ENCODE measurements at regions of chr1 and their contacts with region 1.

Region 1: DNA sequence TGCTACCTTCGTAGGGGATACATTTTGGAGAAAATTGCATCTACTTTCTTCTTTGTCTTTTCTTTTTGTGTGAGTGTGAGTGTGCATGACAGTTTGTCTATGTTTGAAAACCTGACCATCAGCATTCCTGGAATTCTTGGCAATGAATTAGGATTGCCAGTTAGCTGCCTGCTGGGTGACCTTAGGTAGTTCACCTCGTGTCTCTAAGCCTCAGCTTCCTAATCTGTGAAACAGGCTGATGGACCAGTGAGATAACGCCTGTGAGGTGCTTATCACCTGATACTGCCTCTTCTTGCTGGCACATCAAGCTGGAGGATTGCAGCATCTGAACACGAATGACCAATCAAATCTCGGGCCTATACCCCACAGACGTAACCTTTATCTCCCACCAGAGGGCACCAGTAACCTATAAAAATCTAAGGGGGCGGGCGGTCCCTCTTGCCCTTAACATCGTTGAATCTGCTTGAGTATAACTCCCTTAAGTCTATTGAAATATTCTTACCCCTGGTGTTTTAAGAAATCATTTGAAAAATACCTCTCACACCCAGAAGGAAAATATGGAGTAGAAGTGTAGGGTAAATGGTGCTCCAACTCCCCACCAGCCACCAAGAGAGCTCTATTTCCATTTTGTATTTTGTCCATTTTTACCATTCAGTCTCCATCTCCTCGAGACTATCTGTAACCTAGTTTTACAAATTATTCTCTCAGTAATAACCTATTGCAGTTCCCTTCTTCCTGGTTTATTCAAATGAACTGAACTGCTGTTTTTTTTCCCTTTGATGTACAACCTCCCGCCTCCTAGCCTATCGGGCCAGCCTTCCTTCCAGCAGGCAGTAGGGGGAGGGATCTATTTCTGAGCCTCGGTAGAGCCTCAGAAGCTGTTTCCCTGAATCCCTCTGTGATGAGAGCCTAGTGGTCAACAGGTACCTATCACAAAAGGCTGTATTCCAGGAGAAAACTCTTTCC is 49.7 kb downstream of the MDM4 start:
- DNase-seq: no peak
- H3K4me3 ChIP-seq: no peak overlapping the region
- H3K27ac ChIP-seq: no peak overlapping the region
- H3K4me1 ChIP-seq: peaks cover 0 to 12% (median 8%) of the 10 kb centered on the region in 4 donors
- H3K27me3 ChIP-seq: no peaks in the 10 kb centered on the region
- CTCF ChIP-seq: peak; percentile 70 to 83 (median 71)
- EP300 ChIP-seq: no peak
- POLR2A ChIP-seq: no peak

Region 2: DNA sequence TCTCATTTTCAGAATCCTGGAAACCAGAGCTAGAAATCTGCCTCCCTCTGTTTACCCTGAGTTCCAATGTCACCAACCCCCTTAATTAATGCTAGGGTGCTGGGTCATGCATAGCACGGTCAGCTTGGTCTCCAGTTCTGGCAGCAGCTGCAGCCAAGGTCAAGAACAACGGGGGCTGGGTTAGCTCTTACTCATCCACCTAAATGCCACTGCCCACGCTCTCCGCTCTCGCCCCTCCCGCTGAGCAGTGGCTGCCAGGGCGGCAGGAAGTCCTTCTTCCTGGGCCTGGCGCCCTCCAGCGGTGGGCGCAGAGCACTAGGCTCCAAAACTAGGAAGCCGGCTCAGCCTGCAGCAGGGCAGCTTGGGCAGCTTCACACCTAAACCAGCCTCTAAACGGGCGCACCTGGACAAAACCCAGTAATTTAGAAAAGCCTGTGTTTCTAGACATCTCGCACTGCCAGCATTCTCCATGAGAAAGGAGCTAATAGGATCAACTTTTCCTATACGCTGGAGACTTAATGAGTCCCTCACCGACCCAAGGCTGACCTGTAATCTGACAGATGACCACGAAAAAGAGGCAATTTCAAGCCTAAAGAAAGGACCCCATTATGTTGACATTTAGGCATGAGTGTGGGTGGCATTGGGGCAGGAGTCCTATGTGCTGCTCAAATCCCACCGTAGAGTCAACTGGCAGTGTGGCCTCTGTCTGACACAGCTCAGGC is 198.0 kb after region 1 on chr1:
- intact Hi-C with region 1: loop called (anchors 1 kb)
- DNase-seq: no peak
- H3K4me3 ChIP-seq: no peak overlapping the region
- H3K27ac ChIP-seq: no peak overlapping the region
- H3K4me1 ChIP-seq: peaks cover 11 to 14% (median 12%) of the 10 kb centered on the region in 4 donors
- H3K27me3 ChIP-seq: peaks cover 0 to 2% (median 0%) of the 10 kb centered on the region in 4 donors
- CTCF ChIP-seq: peak; percentile 77 to 93 (median 78)
- EP300 ChIP-seq: no peak
- POLR2A ChIP-seq: no peak

Region 3: DNA sequence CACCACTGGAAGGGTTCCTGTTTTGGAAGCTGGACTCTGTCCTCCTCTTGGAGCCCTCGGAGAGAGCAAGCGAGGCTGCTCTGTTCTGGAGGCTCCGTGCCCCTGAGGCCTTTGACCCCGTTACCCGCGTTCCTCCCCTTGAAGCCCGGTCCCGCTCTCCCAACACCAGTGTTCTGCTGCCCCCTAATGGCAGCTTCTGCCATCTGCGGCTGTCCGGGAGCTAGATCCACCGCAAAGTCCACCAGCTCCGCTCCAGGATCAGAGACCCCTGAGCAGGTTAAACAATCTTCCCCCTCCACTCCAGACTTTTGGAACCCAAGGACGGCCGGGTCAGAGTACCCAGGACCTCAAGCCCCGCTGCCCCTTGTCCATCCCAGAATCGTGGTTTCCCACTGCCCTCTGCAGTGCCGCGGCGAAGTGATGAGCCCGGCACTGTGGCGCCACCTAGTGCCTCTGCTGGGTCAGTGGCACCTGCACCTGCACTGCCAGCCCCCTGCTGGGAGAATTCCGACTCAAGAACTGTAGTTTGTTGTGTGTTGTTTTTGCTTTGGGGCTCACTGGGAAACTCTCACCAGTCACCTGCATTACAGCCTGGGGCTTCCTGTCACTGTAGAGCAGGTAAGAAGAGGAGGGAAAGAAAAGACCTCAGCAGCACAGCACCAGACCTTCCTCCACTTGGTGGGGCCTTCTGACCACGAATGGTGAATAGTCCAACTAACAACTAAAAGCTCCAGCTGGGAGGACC is 241.2 kb after region 1 on chr1:
- intact Hi-C with region 1: loop called (anchors 2 kb)
- DNase-seq: peak; percentile 95
- H3K4me3 ChIP-seq: peak overlapping the region; percentile 50 to 66 (median 52)
- H3K27ac ChIP-seq: no peak overlapping the region
- H3K4me1 ChIP-seq: peaks cover 6 to 21% (median 14%) of the 10 kb centered on the region in 4 donors
- H3K27me3 ChIP-seq: no peaks in the 10 kb centered on the region
- CTCF ChIP-seq: peak; percentile 87 to 98 (median 96)
- EP300 ChIP-seq: no peak
- POLR2A ChIP-seq: no peak

Measured in esophagus muscularis mucosa (tissue), 4 donors.